CD4-positive, alpha-beta memory T cell (primary cell): ENCODE measurements at regions of chr6 and their contacts with region 1.

Region 1: GRCh38 chr6:85482905-85483700 is 33.2 kb downstream of the NT5E start:
- DNase-seq: peak; percentile 44 to 73 (median 61)
- H3K4me3 ChIP-seq: no peak overlapping the region
- H3K4me3 Mint-ChIP-seq: no peak overlapping the region
- H3K27ac ChIP-seq: no peak overlapping the region
- H3K27ac Mint-ChIP-seq: peak overlapping the region in 1 of 7 donors; percentile 24
- H3K4me1 ChIP-seq: peaks cover 5% of the 10 kb centered on the region
- H3K4me1 Mint-ChIP-seq: peaks cover 3 to 7% (median 6%) of the 10 kb centered on the region in 4 donors
- H3K27me3 ChIP-seq: no peaks in the 10 kb centered on the region
- H3K27me3 Mint-ChIP-seq: peaks cover 1 to 9% of the 10 kb centered on the region in 2 donors

Region 2: DNA sequence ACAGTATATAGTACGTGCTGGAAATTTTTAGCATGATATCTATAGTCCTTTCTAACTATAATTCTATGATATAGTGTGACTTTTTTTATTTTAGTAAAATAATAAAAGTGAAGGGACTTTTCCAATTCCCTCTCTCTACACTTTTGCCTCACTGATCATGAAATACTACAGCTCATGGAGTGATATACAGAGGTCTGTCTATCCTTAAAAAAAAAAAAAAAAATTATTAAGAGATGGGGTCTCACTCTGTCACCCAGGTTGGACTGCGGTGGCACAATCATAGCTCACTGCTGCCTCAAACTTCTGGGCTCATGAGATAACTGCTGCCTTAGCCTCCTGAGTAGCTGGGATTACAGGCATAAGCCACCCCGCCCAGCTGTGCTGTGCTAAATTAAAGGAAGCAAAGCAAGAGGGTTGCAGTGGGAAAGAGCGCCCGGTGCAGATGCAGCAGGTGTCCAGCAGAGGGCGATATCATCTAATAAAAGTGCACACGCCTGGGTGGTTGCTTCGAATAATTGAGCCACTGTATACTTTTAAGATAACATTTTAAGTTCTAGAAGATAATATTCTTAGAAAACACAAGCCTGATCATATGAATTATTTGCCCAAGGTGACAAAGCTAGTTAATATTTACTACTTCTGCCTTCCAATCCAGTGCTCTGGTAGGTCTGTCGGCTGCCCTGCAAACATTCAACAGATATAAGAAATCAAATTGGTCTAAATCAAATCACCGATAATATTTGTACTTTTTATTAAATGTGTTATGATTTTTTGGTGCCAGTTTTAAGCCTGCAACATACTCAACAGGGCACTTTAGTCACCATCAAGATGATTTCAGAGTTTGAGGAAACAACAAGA is 128.1 kb before region 1 on chr6:
- CTCF ChIA-PET with region 1: interaction called, 80 read pairs
- POLR2A ChIA-PET with region 1: interaction called, 3 read pairs
- intact Hi-C with region 1: loop called (anchors 1 kb)
- DNase-seq: peak in 4 of 5 donors; percentile 27 to 46 (median 40)
- H3K4me3 ChIP-seq: no peak overlapping the region
- H3K4me3 Mint-ChIP-seq: no peak overlapping the region
- H3K27ac ChIP-seq: no peak overlapping the region
- H3K27ac Mint-ChIP-seq: no peak overlapping the region
- H3K4me1 ChIP-seq: no peaks in the 10 kb centered on the region
- H3K4me1 Mint-ChIP-seq: no peaks in the 10 kb centered on the region
- H3K27me3 ChIP-seq: no peaks in the 10 kb centered on the region
- H3K27me3 Mint-ChIP-seq: peaks cover 2 to 5% of the 10 kb centered on the region in 2 donors

Region 3: DNA sequence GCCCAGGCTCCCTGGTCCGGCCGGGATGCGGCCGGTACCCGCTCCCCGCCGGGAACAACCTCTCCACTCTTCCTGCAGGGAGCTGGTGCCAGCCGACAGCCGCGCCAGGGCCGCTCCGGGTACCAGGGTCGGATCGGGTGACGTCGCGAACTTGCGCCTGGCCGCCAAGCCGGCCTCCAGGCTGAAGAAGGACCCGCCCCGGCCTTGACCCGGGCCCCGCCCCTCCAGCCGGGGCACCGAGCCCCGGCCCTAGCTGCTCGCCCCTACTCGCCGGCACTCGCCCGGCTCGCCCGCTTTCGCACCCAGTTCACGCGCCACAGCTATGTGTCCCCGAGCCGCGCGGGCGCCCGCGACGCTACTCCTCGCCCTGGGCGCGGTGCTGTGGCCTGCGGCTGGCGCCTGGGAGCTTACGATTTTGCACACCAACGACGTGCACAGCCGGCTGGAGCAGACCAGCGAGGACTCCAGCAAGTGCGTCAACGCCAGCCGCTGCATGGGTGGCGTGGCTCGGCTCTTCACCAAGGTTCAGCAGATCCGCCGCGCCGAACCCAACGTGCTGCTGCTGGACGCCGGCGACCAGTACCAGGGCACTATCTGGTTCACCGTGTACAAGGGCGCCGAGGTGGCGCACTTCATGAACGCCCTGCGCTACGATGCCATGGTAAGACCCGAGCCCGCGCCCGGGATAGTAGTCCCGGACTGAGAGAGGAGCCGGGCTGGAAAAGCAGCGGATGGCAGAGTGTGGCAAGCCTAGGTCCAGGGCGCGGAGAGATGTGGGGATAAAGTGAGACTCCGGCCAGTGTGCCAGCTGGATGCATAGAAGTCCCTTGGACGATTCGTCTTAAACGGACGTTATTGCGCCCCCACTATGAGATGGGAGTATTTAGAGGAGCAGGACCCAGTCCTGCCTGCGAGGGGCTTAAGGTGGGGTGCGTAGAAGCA is 33.0 kb before region 1 on chr6 and contains the start of gene NT5E:
- CTCF ChIA-PET with region 1: interaction called, 9 read pairs
- POLR2A ChIA-PET with region 1: interaction called, 3 read pairs
- intact Hi-C with region 1: loop called (anchors 1 kb)
- DNase-seq: peak in 4 of 5 donors; percentile 16 to 45 (median 27)
- H3K4me3 ChIP-seq: no peak within 1 kb of the TSS
- H3K4me3 Mint-ChIP-seq: peak within 1 kb of the TSS; percentile 82 to 95 (median 90)
- H3K27ac ChIP-seq: no peak within 1 kb of the TSS
- H3K27ac Mint-ChIP-seq: peak within 1 kb of the TSS in 5 of 7 donors; percentile 38 to 87 (median 72)
- H3K4me1 ChIP-seq: peaks cover 7% of the 10 kb centered on the region
- H3K4me1 Mint-ChIP-seq: peaks cover 9 to 36% (median 16%) of the 10 kb centered on the region in 4 donors
- H3K27me3 ChIP-seq: peaks cover 8% of the 10 kb centered on the region
- H3K27me3 Mint-ChIP-seq: peaks cover 37 to 46% of the 10 kb centered on the region in 2 donors
- total RNA-seq, gene NT5E: 3.3 TPM

Region 4: GRCh38 chr6:85460921-85461797 is 21.9 kb before region 1 on chr6:
- CTCF ChIA-PET with region 1: interaction called, 61 read pairs
- POLR2A ChIA-PET with region 1: no interaction called
- intact Hi-C with region 1: no loop called
- DNase-seq: peak in 4 of 5 donors; percentile 23 to 48 (median 37)
- H3K4me3 ChIP-seq: no peak overlapping the region
- H3K4me3 Mint-ChIP-seq: peak overlapping the region in 5 of 8 donors; percentile 7 to 40 (median 30)
- H3K27ac ChIP-seq: no peak overlapping the region
- H3K27ac Mint-ChIP-seq: peak overlapping the region; percentile 13 to 77 (median 48)
- H3K4me1 ChIP-seq: peaks cover 28% of the 10 kb centered on the region
- H3K4me1 Mint-ChIP-seq: peaks cover 6 to 56% (median 36%) of the 10 kb centered on the region in 4 donors
- H3K27me3 ChIP-seq: no peaks in the 10 kb centered on the region
- H3K27me3 Mint-ChIP-seq: peaks cover 6 to 15% of the 10 kb centered on the region in 2 donors

Region 5: DNA sequence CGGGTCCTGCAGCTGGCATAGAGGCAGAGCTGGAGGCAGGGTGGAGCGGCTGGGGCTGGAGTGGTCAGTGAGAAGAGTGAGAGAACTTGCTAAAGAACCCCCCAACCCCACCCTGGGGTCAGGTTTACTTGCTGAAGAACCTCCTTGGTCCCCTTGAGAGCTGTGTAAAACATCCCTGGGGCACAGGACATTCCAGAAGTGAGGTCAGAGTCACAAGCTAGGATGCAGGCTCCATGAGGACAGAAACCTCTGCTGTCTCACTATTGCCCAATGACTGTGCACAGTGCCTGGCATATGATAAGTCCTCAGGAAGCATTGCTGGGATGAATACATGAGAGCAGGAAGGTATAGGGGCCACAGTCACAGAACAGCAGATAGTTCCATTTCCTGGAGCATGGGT is 14.8 kb before region 1 on chr6:
- CTCF ChIA-PET with region 1: interaction called, 61 read pairs
- POLR2A ChIA-PET with region 1: no interaction called
- intact Hi-C with region 1: no loop called
- DNase-seq: no peak
- H3K4me3 ChIP-seq: no peak overlapping the region
- H3K4me3 Mint-ChIP-seq: no peak overlapping the region
- H3K27ac ChIP-seq: no peak overlapping the region
- H3K27ac Mint-ChIP-seq: no peak overlapping the region
- H3K4me1 ChIP-seq: peaks cover 3% of the 10 kb centered on the region
- H3K4me1 Mint-ChIP-seq: peaks cover 3 to 18% (median 17%) of the 10 kb centered on the region in 4 donors
- H3K27me3 ChIP-seq: no peaks in the 10 kb centered on the region
- H3K27me3 Mint-ChIP-seq: peaks cover 3 to 6% of the 10 kb centered on the region in 2 donors

Region 6: DNA sequence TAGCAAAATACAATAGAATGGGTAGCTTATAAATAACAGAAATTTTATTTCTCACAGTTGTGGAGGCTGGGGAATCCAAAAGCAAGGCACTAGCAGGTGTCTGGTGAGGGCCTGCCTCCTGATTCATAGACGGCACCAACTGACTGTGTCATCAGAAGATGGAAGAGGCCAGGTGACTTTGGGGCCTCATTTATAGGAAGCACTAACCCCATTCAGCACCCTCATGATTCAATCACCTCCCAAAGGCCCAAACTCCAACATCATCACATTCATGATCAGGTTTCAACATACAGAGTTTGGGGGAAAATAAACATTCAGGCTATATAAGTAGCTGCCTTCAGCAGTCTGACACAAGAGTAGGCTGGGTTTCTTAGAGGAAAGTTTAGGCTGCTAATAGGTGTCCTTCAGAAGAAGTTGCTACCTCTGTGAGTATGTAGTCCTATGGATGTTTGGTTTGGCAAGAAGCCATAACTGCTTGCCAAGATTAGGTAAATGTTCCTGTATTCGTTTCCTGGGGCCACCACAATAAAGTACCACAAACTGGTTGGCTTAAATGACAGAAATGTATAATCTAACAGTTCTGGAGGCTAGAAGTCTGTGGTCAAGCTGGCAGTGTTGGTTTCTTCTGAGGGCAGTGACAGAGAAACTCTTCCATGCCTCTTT is 15.6 kb after region 1 on chr6:
- CTCF ChIA-PET with region 1: interaction called, 39 read pairs
- POLR2A ChIA-PET with region 1: no interaction called
- intact Hi-C with region 1: no loop called
- DNase-seq: peak in 3 of 5 donors; percentile 2 to 27 (median 12)
- H3K4me3 ChIP-seq: no peak overlapping the region
- H3K4me3 Mint-ChIP-seq: no peak overlapping the region
- H3K27ac ChIP-seq: no peak overlapping the region
- H3K27ac Mint-ChIP-seq: no peak overlapping the region
- H3K4me1 ChIP-seq: peaks cover 9% of the 10 kb centered on the region
- H3K4me1 Mint-ChIP-seq: peaks cover 12 to 25% (median 18%) of the 10 kb centered on the region in 4 donors
- H3K27me3 ChIP-seq: no peaks in the 10 kb centered on the region
- H3K27me3 Mint-ChIP-seq: no peaks in the 10 kb centered on the region

Region 7: DNA sequence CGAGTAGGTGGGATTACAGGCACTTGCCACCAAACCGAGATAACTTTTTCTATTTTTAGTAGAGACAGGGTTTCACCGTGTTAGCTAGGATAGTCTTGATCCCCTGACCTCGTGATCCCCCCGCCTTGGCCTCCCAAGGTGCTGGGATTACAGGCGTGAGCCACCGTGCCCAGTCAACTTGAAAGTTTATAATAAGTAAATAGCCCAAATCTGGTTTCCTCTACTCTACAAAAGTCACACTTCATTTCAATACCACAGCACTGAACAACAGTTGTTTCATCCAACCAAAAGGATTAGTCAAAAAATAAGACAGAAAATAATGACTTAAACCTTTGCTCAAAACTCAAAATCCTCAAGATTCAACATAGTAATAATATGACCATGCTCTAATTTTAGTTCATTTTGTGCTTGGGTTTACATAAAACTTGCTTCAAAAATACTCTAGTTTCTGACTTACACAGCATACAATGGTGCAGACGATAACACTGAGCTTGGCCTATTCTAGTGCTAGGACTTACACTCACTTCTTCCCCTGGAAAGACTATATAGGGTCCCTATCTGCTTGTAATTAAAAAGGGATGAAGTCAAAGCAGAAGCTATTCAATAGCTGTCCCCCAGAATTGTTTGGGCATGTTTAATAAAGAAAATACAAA is 23.5 kb after region 1 on chr6:
- CTCF ChIA-PET with region 1: interaction called, 17 read pairs
- POLR2A ChIA-PET with region 1: no interaction called
- intact Hi-C with region 1: no loop called
- DNase-seq: no peak
- H3K4me3 ChIP-seq: no peak overlapping the region
- H3K4me3 Mint-ChIP-seq: no peak overlapping the region
- H3K27ac ChIP-seq: no peak overlapping the region
- H3K27ac Mint-ChIP-seq: no peak overlapping the region
- H3K4me1 ChIP-seq: no peaks in the 10 kb centered on the region
- H3K4me1 Mint-ChIP-seq: peaks cover 0 to 2% (median under 1%) of the 10 kb centered on the region in 4 donors
- H3K27me3 ChIP-seq: no peaks in the 10 kb centered on the region
- H3K27me3 Mint-ChIP-seq: no peaks in the 10 kb centered on the region